ENCODE measurements at regions of chr19 and their contacts with region 1.

Region 1: GRCh38 chr19:6616011-6616410 is 25.1 kb upstream of the CD70 start:
- DNase-seq: no peak
- H3K4me3 Mint-ChIP-seq: no peak overlapping the region
- H3K27ac Mint-ChIP-seq: peak overlapping the region; percentile 66
- H3K4me1 Mint-ChIP-seq: peaks cover 31% of the 10 kb centered on the region
- H3K27me3 Mint-ChIP-seq: peaks cover 10% of the 10 kb centered on the region

Region 2: GRCh38 chr19:6218491-6219162 is 397.4 kb before region 1 on chr19:
- intact Hi-C with region 1: no loop called
- DNase-seq: peak; percentile 74
- H3K4me3 Mint-ChIP-seq: no peak overlapping the region
- H3K27ac Mint-ChIP-seq: peak overlapping the region; percentile 38
- H3K4me1 Mint-ChIP-seq: peaks cover 2% of the 10 kb centered on the region
- H3K27me3 Mint-ChIP-seq: no peaks in the 10 kb centered on the region

Region 3: GRCh38 chr19:6599866-6600454 is 16.1 kb before region 1 on chr19:
- intact Hi-C with region 1: loop called (anchors 2 kb)
- DNase-seq: no peak
- H3K4me3 Mint-ChIP-seq: no peak overlapping the region
- H3K27ac Mint-ChIP-seq: no peak overlapping the region
- H3K4me1 Mint-ChIP-seq: peaks cover 53% of the 10 kb centered on the region
- H3K27me3 Mint-ChIP-seq: no peaks in the 10 kb centered on the region

Region 4: DNA sequence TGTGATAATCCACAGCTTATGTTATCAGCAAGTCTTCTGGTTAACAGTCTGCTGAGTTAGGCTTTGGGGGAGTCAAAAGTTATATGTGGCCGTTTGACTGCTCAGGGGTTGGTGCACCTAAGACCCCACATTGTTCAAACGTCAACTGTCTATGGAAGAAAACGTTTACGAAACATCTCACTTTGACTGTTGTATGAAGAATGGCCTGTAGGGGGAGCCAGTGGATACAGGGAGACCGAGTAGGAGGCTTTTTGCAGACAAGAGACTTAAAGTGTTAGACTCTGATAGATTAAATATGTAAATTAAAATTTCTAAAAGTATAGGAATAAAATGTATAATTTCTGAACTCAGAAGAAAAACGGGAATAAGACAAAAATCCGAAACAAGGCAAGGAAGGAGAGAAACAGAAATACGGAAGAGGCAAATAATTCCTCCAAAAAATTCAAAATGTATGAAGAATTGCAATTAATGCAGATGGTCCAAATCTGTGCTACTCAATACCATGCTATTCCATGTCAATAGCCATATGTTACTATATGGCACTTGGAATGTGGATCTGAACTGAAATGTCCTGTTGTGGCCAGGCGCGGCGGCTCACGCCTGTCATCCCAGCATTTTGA is 16.1 kb after region 1 on chr19:
- intact Hi-C with region 1: loop called (anchors 2 kb)
- DNase-seq: peak; percentile 71
- H3K4me3 Mint-ChIP-seq: no peak overlapping the region
- H3K27ac Mint-ChIP-seq: no peak overlapping the region
- H3K4me1 Mint-ChIP-seq: peaks cover 25% of the 10 kb centered on the region
- H3K27me3 Mint-ChIP-seq: peaks cover 2% of the 10 kb centered on the region

Region 5: DNA sequence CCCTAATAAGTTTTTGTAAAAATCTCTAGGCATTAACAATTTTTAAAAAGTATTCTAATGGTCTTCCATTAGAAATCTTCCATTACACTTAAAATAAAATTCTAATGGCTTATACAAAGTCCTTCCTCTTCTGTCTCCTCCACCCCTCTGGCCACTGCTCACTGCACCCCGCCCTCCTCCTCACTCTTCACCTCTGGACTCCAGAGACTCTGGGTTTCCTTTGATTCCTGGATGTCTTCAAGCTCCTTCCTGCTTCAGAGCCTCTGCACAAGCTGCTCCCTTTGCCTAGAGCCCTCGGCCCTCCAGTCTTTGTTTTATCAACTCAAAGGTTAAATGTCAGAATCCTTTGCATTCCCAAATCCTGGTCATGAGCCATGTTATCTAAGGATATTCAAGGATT is 33.2 kb after region 1 on chr19:
- intact Hi-C with region 1: no loop called
- DNase-seq: no peak
- H3K4me3 Mint-ChIP-seq: no peak overlapping the region
- H3K27ac Mint-ChIP-seq: no peak overlapping the region
- H3K4me1 Mint-ChIP-seq: peaks cover 35% of the 10 kb centered on the region
- H3K27me3 Mint-ChIP-seq: no peaks in the 10 kb centered on the region

Region 6: GRCh38 chr19:6663236-6664201 is 47.5 kb after region 1 on chr19:
- intact Hi-C with region 1: loop called (anchors 1 kb)
- DNase-seq: no peak
- H3K4me3 Mint-ChIP-seq: no peak overlapping the region
- H3K27ac Mint-ChIP-seq: no peak overlapping the region
- H3K4me1 Mint-ChIP-seq: peaks cover 43% of the 10 kb centered on the region
- H3K27me3 Mint-ChIP-seq: no peaks in the 10 kb centered on the region